Right cardiac atrium (tissue), 5 donors: ENCODE measurements at regions of chr1 and their contacts with region 1.

Region 1: DNA sequence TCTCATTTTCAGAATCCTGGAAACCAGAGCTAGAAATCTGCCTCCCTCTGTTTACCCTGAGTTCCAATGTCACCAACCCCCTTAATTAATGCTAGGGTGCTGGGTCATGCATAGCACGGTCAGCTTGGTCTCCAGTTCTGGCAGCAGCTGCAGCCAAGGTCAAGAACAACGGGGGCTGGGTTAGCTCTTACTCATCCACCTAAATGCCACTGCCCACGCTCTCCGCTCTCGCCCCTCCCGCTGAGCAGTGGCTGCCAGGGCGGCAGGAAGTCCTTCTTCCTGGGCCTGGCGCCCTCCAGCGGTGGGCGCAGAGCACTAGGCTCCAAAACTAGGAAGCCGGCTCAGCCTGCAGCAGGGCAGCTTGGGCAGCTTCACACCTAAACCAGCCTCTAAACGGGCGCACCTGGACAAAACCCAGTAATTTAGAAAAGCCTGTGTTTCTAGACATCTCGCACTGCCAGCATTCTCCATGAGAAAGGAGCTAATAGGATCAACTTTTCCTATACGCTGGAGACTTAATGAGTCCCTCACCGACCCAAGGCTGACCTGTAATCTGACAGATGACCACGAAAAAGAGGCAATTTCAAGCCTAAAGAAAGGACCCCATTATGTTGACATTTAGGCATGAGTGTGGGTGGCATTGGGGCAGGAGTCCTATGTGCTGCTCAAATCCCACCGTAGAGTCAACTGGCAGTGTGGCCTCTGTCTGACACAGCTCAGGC is 78.3 kb upstream of the LRRN2 start:
- DNase-seq: peak; percentile 79 to 91 (median 90)
- ATAC-seq: peak; percentile 93 to 94
- H3K4me3 ChIP-seq: no peak overlapping the region
- H3K27ac ChIP-seq: no peak overlapping the region
- H3K4me1 ChIP-seq: no peaks in the 10 kb centered on the region
- H3K27me3 ChIP-seq: no peaks in the 10 kb centered on the region

Region 2: DNA sequence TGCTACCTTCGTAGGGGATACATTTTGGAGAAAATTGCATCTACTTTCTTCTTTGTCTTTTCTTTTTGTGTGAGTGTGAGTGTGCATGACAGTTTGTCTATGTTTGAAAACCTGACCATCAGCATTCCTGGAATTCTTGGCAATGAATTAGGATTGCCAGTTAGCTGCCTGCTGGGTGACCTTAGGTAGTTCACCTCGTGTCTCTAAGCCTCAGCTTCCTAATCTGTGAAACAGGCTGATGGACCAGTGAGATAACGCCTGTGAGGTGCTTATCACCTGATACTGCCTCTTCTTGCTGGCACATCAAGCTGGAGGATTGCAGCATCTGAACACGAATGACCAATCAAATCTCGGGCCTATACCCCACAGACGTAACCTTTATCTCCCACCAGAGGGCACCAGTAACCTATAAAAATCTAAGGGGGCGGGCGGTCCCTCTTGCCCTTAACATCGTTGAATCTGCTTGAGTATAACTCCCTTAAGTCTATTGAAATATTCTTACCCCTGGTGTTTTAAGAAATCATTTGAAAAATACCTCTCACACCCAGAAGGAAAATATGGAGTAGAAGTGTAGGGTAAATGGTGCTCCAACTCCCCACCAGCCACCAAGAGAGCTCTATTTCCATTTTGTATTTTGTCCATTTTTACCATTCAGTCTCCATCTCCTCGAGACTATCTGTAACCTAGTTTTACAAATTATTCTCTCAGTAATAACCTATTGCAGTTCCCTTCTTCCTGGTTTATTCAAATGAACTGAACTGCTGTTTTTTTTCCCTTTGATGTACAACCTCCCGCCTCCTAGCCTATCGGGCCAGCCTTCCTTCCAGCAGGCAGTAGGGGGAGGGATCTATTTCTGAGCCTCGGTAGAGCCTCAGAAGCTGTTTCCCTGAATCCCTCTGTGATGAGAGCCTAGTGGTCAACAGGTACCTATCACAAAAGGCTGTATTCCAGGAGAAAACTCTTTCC is 198.0 kb before region 1 on chr1:
- intact Hi-C with region 1: loop called in 3 of 4 experiments (anchors 5 kb)
- DNase-seq: peak in 1 of 3 donors; percentile 24
- ATAC-seq: peak; percentile 72 to 84
- H3K4me3 ChIP-seq: no peak overlapping the region
- H3K27ac ChIP-seq: no peak overlapping the region
- H3K4me1 ChIP-seq: no peaks in the 10 kb centered on the region
- H3K27me3 ChIP-seq: no peaks in the 10 kb centered on the region

Region 3: GRCh38 chr1:204607910-204608309 is 156.0 kb before region 1 on chr1:
- intact Hi-C with region 1: no loop called
- DNase-seq: no peak
- ATAC-seq: no peak
- H3K4me3 ChIP-seq: no peak overlapping the region
- H3K27ac ChIP-seq: no peak overlapping the region
- H3K4me1 ChIP-seq: no peaks in the 10 kb centered on the region
- H3K27me3 ChIP-seq: peaks cover 2% of the 10 kb centered on the region

Region 4: GRCh38 chr1:204670152-204670927 is 93.5 kb before region 1 on chr1:
- intact Hi-C with region 1: loop called in 1 of 4 experiments (anchors 10 kb)
- DNase-seq: no peak
- ATAC-seq: peak in 1 of 2 donors; percentile 36
- H3K4me3 ChIP-seq: no peak overlapping the region
- H3K27ac ChIP-seq: no peak overlapping the region
- H3K4me1 ChIP-seq: peaks cover 2% of the 10 kb centered on the region
- H3K27me3 ChIP-seq: no peaks in the 10 kb centered on the region

Region 5: DNA sequence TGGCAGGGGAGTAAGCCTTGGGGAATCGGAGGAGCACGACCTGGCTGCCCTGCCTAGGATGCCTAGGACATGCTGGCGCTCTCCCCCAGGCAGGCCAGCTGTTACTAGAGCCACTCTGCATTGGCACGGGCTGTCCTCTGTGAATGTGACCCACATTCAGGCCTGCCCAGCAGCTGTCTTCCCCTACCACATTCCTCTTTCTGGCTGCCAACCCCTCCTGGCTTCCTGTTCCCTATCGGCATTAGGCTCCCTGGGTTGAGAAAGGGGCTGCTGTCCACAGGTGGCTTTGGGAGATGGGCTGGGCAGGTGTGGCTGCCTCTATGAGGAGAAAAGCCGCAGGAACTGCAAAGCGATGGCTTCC is 104.5 kb after region 1 on chr1:
- intact Hi-C with region 1: no loop called
- DNase-seq: peak; percentile 17 to 75 (median 68)
- ATAC-seq: peak; percentile 75 to 82
- H3K4me3 ChIP-seq: no peak overlapping the region
- H3K27ac ChIP-seq: no peak overlapping the region
- H3K4me1 ChIP-seq: peaks cover 24% of the 10 kb centered on the region
- H3K27me3 ChIP-seq: no peaks in the 10 kb centered on the region